AG04449 (cell line): ENCODE measurements at regions of chr1 and their contacts with region 1.

Region 1: DNA sequence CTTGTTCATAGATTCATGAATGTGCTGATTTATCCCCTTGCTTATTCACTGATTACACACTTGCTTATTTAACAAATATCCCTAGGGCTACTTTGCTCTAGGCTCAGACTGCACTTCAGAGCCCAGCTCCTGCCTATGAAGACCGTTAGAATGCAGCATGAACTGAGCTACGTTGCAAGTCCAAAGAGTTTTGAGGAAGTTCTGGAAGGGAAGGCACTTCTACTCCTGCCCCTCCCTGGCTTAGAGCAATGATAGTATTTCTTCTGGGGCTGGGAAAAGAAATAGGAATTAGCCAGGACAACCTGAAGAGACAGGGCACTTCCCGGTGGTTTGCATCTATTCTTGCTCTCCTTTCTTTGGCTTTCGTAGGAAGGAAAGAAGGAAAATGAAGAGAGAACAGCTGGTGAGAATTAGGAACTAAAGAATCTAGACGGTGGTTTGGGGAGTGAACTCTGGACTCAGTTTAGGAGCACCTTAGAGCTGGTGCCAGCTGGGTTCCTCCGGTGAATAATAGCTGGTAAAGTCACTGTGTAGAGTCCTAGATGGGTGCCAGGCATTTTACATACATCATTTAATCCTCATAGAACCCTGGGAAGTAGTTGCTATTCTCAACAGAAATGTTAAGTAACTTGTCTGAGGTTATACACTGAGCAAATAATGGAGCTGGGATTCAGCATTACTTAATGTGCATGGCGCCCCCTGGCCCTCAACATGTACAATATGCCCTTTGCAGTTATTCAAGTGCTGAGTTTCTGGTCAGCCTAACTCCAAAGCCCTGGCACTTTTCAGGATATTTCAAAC is 65.9 kb downstream of the NDUFS5 start:
- DNase-seq: no peak
- H3K4me3 ChIP-seq: no peak overlapping the region
- CTCF ChIP-seq: peak; percentile 82

Region 2: DNA sequence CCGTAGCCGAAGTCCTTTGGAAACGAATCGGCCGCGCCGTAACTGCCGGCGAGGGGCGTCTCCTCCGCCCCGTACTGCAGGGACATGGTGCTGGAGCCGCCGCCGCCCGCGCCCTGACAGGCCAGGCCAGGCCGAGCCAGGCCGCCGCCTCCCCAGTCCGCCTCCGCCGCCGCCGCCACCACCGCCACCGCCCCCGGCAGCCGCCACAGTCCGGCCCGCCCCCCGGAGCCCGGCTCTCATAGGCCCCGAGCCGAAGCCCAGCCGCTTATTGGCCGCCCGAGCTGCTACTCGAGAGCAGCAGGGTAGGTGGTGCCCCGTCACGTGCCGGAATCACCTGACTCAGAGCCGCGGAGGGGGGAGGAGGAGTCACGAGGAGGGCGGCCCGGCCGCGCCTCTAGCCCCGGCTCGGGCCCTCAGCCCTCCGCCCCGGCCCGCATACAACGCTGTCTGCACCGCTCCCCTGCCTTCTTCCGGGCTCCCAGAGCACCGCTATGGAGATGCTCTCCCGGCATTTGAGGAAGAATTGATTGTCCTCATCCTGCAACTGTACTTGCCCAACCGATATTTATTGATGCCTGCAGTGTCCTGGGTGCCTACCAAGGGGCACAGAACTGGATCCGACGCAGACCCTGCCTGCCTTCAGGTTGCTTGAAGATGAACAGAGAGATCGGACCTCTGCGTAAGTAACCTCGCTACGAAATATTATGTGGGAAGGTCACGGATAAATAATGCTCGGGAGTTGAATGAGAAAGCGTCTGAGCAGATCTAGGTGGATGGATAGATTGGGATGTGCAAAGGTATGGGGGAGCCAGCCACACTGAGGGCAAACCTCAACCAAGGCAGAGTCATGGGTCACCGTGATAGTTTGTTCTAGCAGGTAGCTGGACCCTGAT is 232.2 kb before region 1 on chr1 and contains the start of gene RRAGC:
- CTCF ChIA-PET with region 1: interaction called, 19 read pairs
- POLR2A ChIA-PET with region 1: no interaction called
- DNase-seq: peak; percentile 71
- H3K4me3 ChIP-seq: peak within 1 kb of the TSS; percentile 92
- CTCF ChIP-seq: no peak

Region 3: GRCh38 chr1:39026051-39026865 is 65.8 kb before region 1 on chr1 and contains the start of gene NDUFS5:
- CTCF ChIA-PET with region 1: interaction called, 10 read pairs
- POLR2A ChIA-PET with region 1: interaction called, 4 read pairs
- DNase-seq: peak; percentile 58
- H3K4me3 ChIP-seq: peak within 1 kb of the TSS; percentile 87
- CTCF ChIP-seq: no peak

Region 4: GRCh38 chr1:39076127-39076798 is 15.8 kb before region 1 on chr1:
- CTCF ChIA-PET with region 1: interaction called, 41 read pairs
- POLR2A ChIA-PET with region 1: no interaction called
- DNase-seq: no peak
- H3K4me3 ChIP-seq: no peak overlapping the region
- CTCF ChIP-seq: no peak

Region 5: DNA sequence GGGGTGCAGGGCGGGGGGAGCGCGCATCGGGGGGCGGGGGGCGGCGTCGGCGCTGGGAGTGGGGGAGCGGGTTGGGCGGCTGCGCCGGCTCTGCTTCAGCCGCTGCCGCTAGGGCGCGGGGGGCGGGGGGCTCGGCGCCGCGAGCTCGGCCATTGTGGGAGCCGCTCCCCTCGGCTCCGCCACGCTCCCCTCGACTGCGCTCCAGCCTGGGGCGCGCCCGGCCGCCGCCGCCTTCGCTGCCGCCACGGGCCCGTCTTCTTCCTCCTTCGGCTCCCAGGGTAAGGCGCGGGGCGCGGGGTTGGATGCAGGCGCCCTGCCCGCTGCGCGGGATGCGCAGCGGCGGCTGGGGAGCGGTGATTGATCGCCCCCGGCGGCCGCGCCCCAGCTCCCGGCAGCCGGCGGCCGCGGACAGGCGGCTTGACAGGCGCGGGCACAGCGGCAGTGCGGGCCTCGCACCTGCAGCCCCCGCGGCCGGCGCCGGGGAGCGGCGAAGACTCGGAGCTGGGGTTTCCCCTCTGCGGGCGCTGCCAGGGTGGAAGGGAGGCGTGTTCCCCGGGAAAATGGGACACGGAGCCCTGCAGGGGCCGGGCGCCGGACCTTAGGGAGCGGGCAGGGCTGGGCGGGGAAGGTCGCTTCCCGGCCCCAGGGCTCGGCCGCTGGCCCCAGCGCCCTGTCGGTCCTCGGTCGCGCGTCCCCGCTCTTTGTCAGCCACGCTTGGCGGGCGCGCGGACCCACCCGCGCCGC is 10.6 kb before region 1 on chr1:
- CTCF ChIA-PET with region 1: interaction called, 41 read pairs
- POLR2A ChIA-PET with region 1: no interaction called
- DNase-seq: no peak
- H3K4me3 ChIP-seq: peak overlapping the region; percentile 59
- CTCF ChIP-seq: no peak